ENCODE measurements at regions of chr16 and their contacts with region 1.

Region 1: GRCh38 chr16:11797166-11797956 is at the start of gene ZC3H7A:
- DNase-seq: peak; percentile 92
- H3K4me3 ChIP-seq: peak within 1 kb of the TSS; percentile 85
- H3K27ac ChIP-seq: peak within 1 kb of the TSS; percentile 98
- H3K27me3 ChIP-seq: no peaks in the 10 kb centered on the region
- CTCF ChIP-seq: peak; percentile 44
- polyA plus RNA-seq, gene ZC3H7A: 66.9 and 72.6 TPM in 2 replicates

Region 2: GRCh38 chr16:11586856-11587642 is 210.3 kb before region 1 on chr16 and contains the start of gene LITAF:
- CTCF ChIA-PET with region 1: no interaction called
- POLR2A ChIA-PET with region 1: interaction called, 10 read pairs
- DNase-seq: no peak
- H3K4me3 ChIP-seq: peak within 1 kb of the TSS; percentile 90
- H3K27ac ChIP-seq: peak within 1 kb of the TSS; percentile 57
- H3K27me3 ChIP-seq: no peaks in the 10 kb centered on the region
- CTCF ChIP-seq: no peak
- polyA plus RNA-seq, gene LITAF: 190 and 217 TPM in 2 replicates

Region 3: DNA sequence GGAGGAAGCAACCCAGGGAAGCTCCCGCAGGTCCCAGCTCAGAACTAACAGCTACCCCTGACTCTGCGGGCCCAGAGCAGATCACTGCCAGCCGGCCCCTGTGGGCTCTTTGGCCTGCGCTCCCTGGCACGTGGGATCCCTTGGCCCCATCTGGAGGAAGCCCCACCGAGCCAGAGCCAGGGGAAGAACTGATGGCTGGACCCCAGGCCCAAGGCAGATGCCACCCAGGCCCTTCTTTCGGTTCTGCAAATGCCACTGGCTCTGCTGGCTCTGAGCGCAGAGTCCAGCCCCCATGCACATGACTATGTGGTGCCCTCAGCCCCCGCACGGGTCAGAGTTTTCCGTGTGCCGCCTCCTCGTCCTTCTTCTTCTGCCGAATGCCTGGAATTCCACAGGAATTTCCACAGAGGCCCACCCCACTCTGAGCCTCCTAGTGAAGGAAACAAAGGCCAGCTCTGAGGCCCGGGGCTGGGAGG is 164.9 kb before region 1 on chr16:
- CTCF ChIA-PET with region 1: no interaction called
- POLR2A ChIA-PET with region 1: no interaction called
- DNase-seq: peak; percentile 85
- H3K4me3 ChIP-seq: no peak overlapping the region; the same call in 1 of the 2 replicates
- H3K27ac ChIP-seq: peak overlapping the region; percentile 96
- H3K27me3 ChIP-seq: no peaks in the 10 kb centered on the region
- CTCF ChIP-seq: no peak

Region 4: DNA sequence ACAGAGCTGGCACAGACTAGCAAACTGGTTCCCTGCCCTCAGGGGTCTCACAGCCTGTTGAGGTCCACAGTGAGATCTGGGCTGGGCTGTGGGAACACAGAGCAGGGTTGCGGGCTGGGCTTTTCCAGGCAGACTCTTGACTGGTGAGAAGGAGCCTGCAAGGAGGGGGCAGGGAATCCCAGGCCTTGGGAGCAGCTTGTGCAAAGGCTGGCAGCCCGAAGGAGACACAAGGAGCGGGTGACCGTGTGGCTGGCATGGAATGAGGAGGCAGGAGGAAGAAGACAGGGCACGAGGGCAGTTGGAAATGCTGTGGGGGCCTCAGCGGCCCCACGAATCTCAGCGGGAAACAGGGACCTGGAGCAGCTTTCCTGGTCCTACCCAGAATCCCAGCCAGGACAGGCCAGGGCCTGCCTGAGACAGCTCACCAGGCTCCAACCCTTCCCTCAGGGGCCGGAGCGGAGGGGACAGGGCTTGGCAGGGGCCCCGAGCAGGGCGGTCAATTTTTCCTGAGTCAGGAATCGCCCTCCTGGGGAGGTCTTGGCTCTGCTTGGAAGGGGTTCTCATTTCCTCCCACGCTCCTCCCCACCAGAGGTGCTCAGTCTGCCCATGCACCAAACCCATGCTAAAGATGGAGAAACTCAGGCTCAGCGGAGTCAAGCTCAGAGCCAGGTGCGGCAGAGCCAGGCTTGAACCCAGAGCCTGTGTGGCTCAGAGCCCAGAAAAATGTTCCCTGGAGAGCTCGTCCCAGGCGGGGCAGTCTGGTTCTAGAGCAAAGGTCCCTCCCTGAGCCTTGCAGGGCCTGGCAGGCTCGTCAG is 138.3 kb before region 1 on chr16:
- CTCF ChIA-PET with region 1: no interaction called
- POLR2A ChIA-PET with region 1: no interaction called
- DNase-seq: no peak
- H3K4me3 ChIP-seq: no peak overlapping the region
- H3K27ac ChIP-seq: no peak overlapping the region
- H3K27me3 ChIP-seq: no peaks in the 10 kb centered on the region
- CTCF ChIP-seq: no peak

Region 5: DNA sequence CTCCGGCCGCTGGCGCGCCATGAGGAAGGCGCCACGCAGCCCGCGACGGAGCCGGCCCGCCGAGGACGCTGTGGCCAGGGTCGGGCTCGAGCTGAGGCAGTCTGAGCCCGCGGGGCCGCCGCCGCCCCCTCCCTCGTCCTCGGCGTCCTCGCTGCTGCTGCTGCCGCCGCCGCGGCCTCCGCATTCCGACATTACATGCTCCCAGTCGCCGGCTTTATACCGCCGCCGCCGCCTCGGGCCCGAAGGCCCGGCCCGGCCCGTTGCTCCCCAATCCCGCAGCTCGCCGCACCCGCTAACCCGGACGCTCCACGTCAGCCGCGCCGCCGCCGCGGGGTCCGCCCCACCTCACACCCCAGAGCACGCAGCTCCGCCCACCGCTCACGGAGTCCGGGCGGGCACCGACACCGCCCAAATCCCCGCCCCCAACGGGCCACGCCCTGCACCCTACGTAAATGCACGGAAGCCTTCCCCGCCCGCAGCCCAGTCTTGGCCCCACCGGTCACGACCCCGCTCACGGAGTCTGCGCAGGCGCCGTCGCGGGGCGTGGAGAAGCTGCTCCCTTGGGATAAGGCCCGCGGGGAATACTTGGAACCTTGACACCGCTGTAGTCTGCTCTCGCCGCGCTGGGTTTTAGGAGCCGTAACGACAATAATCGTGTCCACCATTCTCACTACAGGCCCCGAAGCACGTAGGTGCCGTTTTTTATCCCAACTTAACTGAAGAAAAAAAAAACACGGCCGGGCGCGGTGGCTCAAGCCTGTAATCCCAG is 54.6 kb before region 1 on chr16 and contains the start of gene TXNDC11:
- CTCF ChIA-PET with region 1: interaction called, 7 read pairs
- POLR2A ChIA-PET with region 1: interaction called, 29 read pairs
- DNase-seq: peak; percentile 93
- H3K4me3 ChIP-seq: peak within 1 kb of the TSS; percentile 86
- H3K27ac ChIP-seq: peak within 1 kb of the TSS; percentile 78
- H3K27me3 ChIP-seq: no peaks in the 10 kb centered on the region
- CTCF ChIP-seq: no peak
- polyA plus RNA-seq, gene TXNDC11: 35.8 and 37.7 TPM in 2 replicates

Region 6: GRCh38 chr16:11759163-11759834 is 38.1 kb before region 1 on chr16:
- CTCF ChIA-PET with region 1: interaction called, 12 read pairs
- POLR2A ChIA-PET with region 1: no interaction called
- DNase-seq: no peak
- H3K4me3 ChIP-seq: no peak overlapping the region
- H3K27ac ChIP-seq: no peak overlapping the region
- H3K27me3 ChIP-seq: no peaks in the 10 kb centered on the region
- CTCF ChIP-seq: no peak

Region 7: GRCh38 chr16:11783319-11784037 is 13.9 kb before region 1 on chr16:
- CTCF ChIA-PET with region 1: interaction called, 18 read pairs
- POLR2A ChIA-PET with region 1: interaction called, 6 read pairs
- DNase-seq: no peak
- H3K4me3 ChIP-seq: peak overlapping the region; percentile 27
- H3K27ac ChIP-seq: peak overlapping the region; percentile 92
- H3K27me3 ChIP-seq: no peaks in the 10 kb centered on the region
- CTCF ChIP-seq: no peak

Region 8: DNA sequence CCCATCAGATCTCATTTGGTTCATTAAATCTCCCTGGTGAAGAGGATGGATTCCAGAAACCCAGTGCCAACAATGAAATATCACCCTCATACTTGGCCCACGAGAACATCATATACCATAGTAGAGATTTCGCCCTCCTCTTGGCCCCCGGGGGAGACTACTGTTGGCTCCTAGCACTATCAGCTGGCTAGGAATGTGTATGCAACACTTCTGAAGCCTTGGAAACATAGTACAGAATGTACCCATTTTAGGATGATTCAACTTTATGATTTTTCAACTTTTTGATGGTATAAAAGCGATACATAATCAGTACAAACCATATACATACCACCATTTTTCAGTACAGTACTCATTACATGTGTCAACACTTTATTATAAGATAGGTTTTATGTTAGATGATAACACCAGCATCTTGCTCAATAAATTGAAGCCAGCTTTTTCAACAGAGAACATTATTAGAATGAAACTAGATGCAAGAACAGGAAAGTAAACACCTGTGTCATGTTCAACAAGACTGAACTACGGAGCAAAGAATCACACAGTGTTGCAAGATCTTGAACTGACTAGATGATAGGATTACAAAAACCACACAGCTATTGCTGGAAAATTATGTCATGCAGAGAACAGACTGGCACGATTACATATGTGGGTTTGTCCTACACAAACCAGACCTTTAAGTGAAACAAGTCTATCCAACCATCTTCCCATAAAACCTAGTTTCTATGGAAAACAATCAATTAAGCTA is 36.8 kb after region 1 on chr16:
- CTCF ChIA-PET with region 1: interaction called, 13 read pairs
- POLR2A ChIA-PET with region 1: interaction called, 3 read pairs
- DNase-seq: peak; percentile 58
- H3K4me3 ChIP-seq: no peak overlapping the region
- H3K27ac ChIP-seq: peak overlapping the region; percentile 47
- H3K27me3 ChIP-seq: no peaks in the 10 kb centered on the region
- CTCF ChIP-seq: no peak

Measured in AG04450 (cell line).